Activated CD4-positive, alpha-beta T cell treated with anti-CD3 and anti-CD28 coated beads, Interleukin-2, amount 10 ng/mL, durations not matched to agents 7 days and 5 days (primary cell): ENCODE measurements at regions of chr12 and their contacts with region 1.

Region 1: DNA sequence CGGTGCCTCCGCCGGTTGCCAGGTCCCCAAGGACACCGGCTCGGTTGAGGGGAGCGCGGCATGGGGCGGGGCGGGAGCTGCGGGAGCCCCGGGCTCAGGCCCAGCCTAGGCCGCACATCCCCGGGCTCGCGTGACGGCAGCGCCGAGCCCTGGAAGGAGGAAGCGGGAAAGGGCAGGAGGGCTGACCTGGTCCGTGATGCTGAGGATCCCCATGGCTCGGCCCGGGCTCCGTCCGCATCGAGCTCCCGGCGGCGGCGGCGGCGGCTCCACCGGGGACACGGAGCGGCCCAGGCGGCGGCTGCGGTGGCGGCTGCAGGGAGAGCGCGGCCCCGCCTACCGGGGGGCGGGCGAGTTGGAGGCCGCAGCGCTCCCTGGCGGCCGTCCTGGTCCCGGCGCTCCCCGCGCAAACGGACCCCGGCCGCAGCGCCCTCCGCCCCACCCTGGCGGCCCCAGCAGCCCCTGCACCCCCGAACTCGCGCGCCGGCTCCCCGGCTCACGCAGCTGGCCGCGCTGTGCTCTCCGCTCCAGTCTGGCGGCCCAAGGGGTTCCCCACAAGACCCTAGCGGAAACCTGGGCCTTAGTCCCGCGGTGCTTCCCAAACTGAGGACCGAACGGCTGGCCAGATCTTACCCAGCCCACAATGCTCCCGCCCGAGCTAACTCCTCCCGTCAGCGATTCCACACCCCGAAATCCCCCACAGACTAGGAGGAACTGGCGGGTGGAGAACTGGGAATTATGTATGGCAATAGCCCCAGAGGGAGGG is at the start of gene ANKRD52:
- DNase-seq: peak; percentile 76
- H3K4me3 Mint-ChIP-seq: peak within 1 kb of the TSS; percentile 88
- H3K27ac Mint-ChIP-seq: peak within 1 kb of the TSS; percentile 88
- H3K4me1 Mint-ChIP-seq: peaks cover 19% of the 10 kb centered on the region
- H3K27me3 Mint-ChIP-seq: no peaks in the 10 kb centered on the region
- total RNA-seq, gene ANKRD52: 39.0 to 45.9 TPM

Region 2: DNA sequence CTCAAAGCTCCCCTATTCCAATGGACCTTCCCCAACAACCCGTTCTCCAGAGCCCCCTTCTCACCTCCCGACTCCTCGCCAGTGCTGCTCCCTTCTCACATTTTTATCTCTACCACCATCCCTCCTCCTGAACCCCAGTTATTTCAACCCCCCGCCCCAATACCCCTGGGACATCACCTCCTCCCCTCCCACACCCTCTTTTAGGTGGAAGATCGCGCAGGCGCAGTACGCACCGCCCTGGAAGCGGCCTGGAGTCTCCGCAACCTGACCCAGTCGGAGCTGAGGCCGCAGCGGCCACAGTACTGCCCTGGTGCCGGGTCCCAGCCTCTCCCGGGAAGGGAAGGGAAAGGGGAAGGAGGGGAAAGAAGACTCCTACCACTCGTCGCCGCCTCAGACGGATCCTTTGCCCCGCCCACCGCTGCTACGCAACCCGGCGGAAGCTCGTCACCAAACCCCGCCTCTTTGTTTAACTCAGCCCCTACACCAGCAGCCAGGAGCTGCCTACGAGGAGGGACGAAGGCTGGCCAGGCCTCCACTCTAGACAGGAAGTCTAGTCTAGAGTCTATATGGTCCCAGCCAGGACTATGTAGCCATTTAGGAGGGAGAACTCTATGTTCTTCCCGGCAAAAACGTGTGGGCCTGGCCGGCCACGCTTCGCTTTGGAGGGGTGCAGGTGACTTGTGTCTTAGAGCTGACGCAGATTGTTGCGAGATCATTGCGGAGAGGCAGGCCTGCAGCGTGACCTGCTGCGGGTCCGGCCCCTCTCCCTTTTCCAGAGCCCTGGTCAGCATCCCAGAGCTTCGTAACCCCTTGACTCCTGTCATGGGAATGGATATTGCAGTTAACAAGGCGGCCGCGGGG is 36.5 kb before region 1 on chr12 and contains the start of gene RNF41:
- CTCF ChIA-PET with region 1: interaction called, 13 read pairs
- POLR2A ChIA-PET with region 1: no interaction called
- DNase-seq: peak; percentile 95
- H3K4me3 Mint-ChIP-seq: peak within 1 kb of the TSS; percentile 90
- H3K27ac Mint-ChIP-seq: peak within 1 kb of the TSS; percentile 93
- H3K4me1 Mint-ChIP-seq: peaks cover 49% of the 10 kb centered on the region
- H3K27me3 Mint-ChIP-seq: no peaks in the 10 kb centered on the region
- total RNA-seq, gene RNF41: 30.1 to 31.6 TPM

Region 3: DNA sequence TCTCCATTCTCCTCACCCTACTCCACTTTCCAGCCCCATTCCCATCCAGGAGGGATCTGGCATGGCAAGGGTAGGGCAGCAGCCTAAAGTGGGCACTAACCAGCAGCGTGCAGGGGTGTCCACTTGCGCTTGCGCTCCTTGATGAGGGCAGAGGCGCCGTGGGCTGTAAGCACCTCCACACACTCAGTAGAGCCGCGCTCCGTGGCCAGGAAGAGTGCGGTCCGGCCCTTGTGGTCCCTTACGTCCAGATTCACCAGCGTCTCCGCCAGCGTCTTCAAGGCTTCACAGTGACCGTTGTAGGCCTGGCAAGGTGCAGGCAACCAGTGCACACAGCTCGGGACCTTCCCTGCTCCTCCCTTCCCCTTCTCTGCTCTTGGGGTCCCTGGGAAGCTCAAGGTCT is 10.3 kb before region 1 on chr12:
- CTCF ChIA-PET with region 1: interaction called, 27 read pairs
- POLR2A ChIA-PET with region 1: no interaction called
- DNase-seq: no peak
- H3K4me3 Mint-ChIP-seq: no peak overlapping the region
- H3K27ac Mint-ChIP-seq: no peak overlapping the region
- H3K4me1 Mint-ChIP-seq: no peaks in the 10 kb centered on the region
- H3K27me3 Mint-ChIP-seq: no peaks in the 10 kb centered on the region

Region 4: GRCh38 chr12:56286044-56286830 is 28.0 kb after region 1 on chr12:
- CTCF ChIA-PET with region 1: interaction called, 12 read pairs
- POLR2A ChIA-PET with region 1: no interaction called
- DNase-seq: no peak
- H3K4me3 Mint-ChIP-seq: no peak overlapping the region
- H3K27ac Mint-ChIP-seq: peak overlapping the region; percentile 25
- H3K4me1 Mint-ChIP-seq: peaks cover 26% of the 10 kb centered on the region
- H3K27me3 Mint-ChIP-seq: no peaks in the 10 kb centered on the region